ENCODE measurements at regions of chr5 and their contacts with region 1.

Region 1: DNA sequence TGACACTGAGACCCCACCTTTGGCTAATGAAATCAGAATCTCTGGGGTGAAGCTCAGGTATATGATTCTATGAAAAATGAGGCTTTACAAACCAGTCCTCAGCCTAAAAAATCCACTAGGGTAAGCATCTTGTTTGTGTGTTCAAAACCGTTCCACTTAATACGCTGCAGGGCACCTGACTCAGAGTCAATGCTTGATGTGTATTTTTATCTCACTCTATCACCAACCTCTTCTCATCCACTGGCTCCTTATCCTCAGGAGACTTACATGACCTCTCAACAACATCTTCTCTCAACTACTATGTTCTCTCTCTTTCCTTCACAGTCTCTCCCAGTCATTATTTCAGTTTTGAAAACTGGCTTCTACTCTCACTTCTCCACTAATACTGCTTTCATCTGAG is 153.3 kb upstream of the KCNN2 start:
- DNase-seq: no peak
- H3K4me3 ChIP-seq: no peak overlapping the region
- CTCF ChIP-seq: no peak

Region 2: DNA sequence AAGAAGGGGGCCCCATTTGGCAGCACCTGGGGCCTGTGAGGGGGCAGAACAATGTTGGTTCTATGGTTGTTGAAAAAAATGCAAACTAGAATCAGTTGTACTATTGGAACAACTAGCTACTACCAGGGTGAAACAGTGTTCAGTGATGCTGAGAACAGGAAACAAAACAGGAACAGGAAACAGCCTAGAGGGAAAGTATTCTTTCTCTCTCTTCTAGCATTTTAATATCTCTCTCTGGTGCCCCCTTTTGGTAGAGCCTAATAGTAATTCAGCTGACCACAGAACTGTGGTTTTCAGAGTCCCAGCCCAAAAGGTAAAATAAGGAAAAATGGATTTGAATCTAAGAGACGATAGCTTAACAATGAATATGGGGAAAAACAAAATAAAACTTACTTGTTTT is 15.3 kb after region 1 on chr5:
- CTCF ChIA-PET with region 1: interaction called, 17 read pairs
- POLR2A ChIA-PET with region 1: no interaction called
- DNase-seq: no peak
- H3K4me3 ChIP-seq: no peak overlapping the region
- CTCF ChIP-seq: no peak